GM13976 (cell line): ENCODE measurements at regions of chr20 and their contacts with region 1.

Region 1: GRCh38 chr20:63163596-63164455 is 52.1 kb downstream of the YTHDF1 start:
- DNase-seq: no peak
- CTCF ChIP-seq: no peak

Region 2: GRCh38 chr20:63071541-63072181 is 92.2 kb before region 1 on chr20:
- in situ Hi-C with region 1: loop called (anchors 10 kb)
- DNase-seq: no peak
- CTCF ChIP-seq: no peak

Region 3: GRCh38 chr20:63624486-63624885 is 460.7 kb after region 1 on chr20:
- in situ Hi-C with region 1: no loop called
- DNase-seq: no peak
- CTCF ChIP-seq: no peak